HCT116 (cell line): ENCODE measurements at regions of chr2 and their contacts with region 1.

Region 1: DNA sequence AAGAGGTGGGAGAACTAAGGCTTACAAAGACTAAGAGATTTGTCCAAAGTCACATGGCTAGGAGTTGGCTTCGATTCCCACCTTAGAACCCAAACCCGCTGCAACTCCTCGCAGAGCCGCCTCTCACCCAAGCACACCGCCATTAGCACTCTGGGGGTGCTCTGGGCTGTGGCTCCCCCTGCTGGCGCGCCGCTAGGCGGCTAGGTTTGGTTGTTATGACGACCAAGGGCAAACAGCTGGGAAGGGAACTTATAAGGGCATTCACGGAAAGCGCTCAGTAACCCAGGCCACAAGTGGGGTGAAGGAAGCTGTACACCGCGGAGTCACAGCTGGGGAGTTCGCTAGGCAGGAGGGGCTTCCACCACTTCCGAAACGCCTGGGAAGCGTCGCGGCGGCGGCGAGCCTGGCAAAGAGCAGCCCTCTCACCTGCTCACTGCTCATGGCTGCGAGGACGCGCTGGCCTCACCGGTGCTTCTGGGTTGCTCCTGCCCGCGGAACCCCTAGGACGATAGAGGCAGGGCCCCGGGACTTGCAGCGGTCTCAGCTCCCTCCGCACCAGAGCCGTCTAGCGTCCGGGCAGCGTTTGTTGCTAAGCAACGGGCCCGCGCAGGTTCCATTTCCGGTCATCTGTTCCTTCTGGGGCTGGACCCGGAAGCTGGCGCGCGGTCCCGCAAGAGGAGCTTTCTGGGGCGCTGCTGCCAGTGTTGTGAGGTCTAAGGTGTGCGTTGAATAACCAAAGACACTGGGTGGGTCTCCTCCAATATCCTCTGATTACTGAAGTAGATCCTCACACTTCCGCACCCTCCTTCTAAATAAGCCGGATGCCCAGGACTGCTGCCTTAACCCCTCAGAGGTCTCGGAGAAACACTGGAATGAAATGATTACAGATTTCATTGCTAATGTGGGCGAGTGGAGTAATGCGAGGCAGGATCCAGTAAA is at the start of gene DNAH7:
- DNase-seq: peak; percentile 31
- ATAC-seq: peak; percentile 94
- H3K4me3 ChIP-seq: no peak within 1 kb of the TSS
- H3K27ac ChIP-seq: no peak within 1 kb of the TSS
- H3K4me1 ChIP-seq: peaks cover 0 to 3% of the 10 kb centered on the region in 2 experiments; a peak in 1 of 4 replicates
- H3K27me3 ChIP-seq: no peaks in the 10 kb centered on the region
- CTCF ChIP-seq: peak; percentile 33 to 77 (median 70); a peak in 5 of 6 replicates
- POLR2A ChIP-seq: no peak
- RAD21 ChIP-seq: peak; percentile 69
- total RNA-seq, gene DNAH7: not detected

Region 2: GRCh38 chr2:195498176-195498575 is 570.4 kb before region 1 on chr2:
- CTCF ChIA-PET with region 1: no interaction called
- POLR2A ChIA-PET with region 1: no interaction called
- RAD21 ChIA-PET with region 1: no interaction called
- intact Hi-C with region 1: loop called (anchors 2 kb)
- DNase-seq: peak; percentile 33
- ATAC-seq: peak; percentile 60
- H3K4me3 ChIP-seq: no peak overlapping the region
- H3K27ac ChIP-seq: no peak overlapping the region
- H3K4me1 ChIP-seq: no peaks in the 10 kb centered on the region
- H3K27me3 ChIP-seq: no peaks in the 10 kb centered on the region
- CTCF ChIP-seq: peak; percentile 26 to 56 (median 40); a peak in 5 of 6 replicates
- POLR2A ChIP-seq: no peak
- RAD21 ChIP-seq: peak; percentile 48

Region 3: DNA sequence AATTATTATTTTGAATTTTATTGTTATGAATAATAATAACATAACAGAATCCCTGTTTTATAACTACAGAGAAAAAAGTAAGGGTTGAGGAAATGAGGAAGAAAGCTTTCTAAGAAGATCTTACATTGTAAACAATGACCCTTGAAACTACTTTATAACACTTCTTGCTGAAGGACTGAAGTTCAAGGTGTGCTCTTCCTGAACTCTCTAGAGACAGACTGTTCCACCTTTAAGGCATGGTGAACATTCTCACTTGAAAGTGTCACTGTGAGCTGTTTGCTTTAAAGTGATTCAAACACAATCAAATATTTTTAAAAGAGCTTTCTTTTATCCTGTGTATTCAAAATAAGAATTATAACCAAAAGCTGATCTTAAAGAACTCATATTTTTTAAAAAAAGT is 131.4 kb before region 1 on chr2:
- CTCF ChIA-PET with region 1: interaction called, 4 read pairs
- POLR2A ChIA-PET with region 1: no interaction called
- RAD21 ChIA-PET with region 1: no interaction called
- intact Hi-C with region 1: loop called (anchors 1 kb)
- DNase-seq: no peak
- ATAC-seq: no peak
- H3K4me3 ChIP-seq: no peak overlapping the region
- H3K27ac ChIP-seq: no peak overlapping the region
- H3K4me1 ChIP-seq: no peaks in the 10 kb centered on the region
- H3K27me3 ChIP-seq: no peaks in the 10 kb centered on the region
- CTCF ChIP-seq: no peak
- POLR2A ChIP-seq: no peak
- RAD21 ChIP-seq: no peak

Region 4: DNA sequence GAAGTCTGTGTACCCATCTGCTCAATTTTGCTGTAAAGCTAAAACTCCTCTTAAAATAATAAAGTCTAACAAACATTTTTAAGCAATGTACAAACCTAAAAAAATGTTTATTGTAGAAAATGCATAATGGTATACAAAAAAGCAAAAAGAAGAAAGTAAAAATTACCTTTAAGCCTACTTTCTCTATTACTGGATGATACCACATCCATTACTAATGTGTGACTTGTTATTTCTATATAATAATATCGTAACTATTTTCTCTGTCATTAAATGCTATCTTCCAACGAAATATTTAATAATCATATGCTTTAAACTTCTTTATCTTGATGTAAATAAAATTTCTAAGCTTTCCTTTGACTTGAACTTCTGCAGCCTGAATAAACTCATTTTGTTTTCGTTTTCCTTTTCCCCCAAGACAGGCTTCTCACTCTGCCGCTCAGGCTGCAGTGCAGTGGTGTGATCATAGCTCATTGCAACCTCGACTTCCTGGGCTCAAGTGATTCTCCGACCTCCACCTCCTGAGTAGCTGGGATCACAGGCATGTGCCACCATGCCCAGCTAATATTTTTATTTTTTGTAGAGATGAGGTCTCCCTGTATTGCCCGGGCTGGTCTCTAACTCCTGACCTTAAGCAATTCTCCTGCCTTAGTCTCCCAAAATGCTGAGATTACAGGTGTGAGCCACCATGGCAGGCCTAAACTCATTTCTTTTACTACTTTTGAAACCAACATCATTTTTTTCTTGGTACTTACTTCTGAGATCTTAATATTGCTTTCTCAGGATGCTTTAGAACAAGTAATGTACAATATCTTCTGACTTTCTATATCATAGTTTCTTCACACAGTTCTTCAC is 18.2 kb after region 1 on chr2:
- CTCF ChIA-PET with region 1: no interaction called
- POLR2A ChIA-PET with region 1: no interaction called
- RAD21 ChIA-PET with region 1: no interaction called
- intact Hi-C with region 1: no loop called
- DNase-seq: no peak
- ATAC-seq: no peak
- H3K4me3 ChIP-seq: no peak overlapping the region
- H3K27ac ChIP-seq: no peak overlapping the region
- H3K4me1 ChIP-seq: no peaks in the 10 kb centered on the region
- H3K27me3 ChIP-seq: no peaks in the 10 kb centered on the region
- CTCF ChIP-seq: no peak
- POLR2A ChIP-seq: no peak
- RAD21 ChIP-seq: no peak